ENCODE measurements at regions of chr17 and their contacts with region 1.

Region 1: GRCh38 chr17:57009737-57010445 is 32.0 kb downstream of the SCPEP1 start:
- DNase-seq: peak; percentile 33
- H3K4me3 ChIP-seq: no peak overlapping the region
- H3K27ac ChIP-seq: no peak overlapping the region
- H3K4me1 ChIP-seq: no peaks in the 10 kb centered on the region
- H3K27me3 ChIP-seq: no peaks in the 10 kb centered on the region
- CTCF ChIP-seq: peak; percentile 9 to 69 (median 42)
- POLR2A ChIP-seq: no peak

Region 2: DNA sequence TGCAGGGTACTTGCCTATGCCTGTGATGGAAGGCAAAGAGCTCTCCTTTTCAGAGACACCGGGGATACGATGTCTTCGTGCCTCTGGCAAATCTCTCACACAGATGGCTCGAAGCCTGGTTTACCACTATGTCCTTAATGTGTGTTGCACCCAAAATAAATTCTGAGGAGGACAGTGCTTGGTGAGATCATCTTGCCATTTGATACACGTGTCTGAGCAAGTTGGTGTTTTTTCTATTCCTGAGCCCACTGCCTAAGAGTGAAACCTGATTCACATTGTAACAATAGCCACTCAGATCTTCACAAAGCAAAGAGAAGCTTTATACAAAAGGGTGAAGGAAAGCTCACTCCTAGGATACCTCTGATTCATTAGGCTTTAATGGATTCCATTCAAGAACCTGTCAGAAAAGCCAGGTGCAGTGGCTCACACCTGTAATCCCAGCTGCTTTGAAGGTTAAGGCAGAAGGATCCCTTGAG is 42.0 kb after region 1 on chr17:
- intact Hi-C with region 1: loop called (anchors 1 kb)
- DNase-seq: peak; percentile 51
- H3K4me3 ChIP-seq: no peak overlapping the region
- H3K27ac ChIP-seq: peak overlapping the region; percentile 27 to 35
- H3K4me1 ChIP-seq: peaks cover 3% of the 10 kb centered on the region
- H3K27me3 ChIP-seq: no peaks in the 10 kb centered on the region
- CTCF ChIP-seq: no peak
- POLR2A ChIP-seq: no peak

Region 3: DNA sequence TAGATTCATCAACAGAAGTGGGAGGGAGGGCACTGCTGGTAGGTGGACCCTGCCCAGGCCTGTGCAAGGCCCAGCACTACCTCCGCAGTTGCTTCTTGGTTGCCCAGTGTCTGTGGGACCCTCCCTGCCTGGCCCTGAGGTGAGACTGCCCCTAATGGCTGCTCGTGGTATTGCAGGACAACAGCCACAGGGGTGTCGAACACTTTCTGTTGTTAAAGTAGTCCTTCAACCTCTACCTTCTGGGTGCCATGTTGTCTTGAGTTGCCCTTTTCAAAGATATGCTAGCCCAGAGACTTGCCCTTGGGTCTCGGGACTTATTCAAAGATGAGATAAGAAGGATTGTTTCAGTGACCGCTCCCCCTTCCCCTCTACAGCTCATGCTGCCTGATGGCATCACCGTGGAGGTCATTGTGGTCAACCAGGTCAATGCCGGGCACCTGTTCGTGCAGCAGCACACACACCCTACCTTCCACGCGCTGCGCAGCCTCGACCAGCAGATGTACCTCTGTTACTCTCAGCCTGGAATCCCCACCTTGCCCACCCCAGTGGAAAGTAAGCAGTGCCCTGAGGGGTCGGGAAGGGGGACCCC is 104.3 kb after region 1 on chr17:
- intact Hi-C with region 1: loop called (anchors 10 kb)
- DNase-seq: no peak
- H3K4me3 ChIP-seq: no peak overlapping the region
- H3K27ac ChIP-seq: no peak overlapping the region
- H3K4me1 ChIP-seq: peaks cover 4% of the 10 kb centered on the region
- H3K27me3 ChIP-seq: no peaks in the 10 kb centered on the region
- CTCF ChIP-seq: peak; percentile 63 to 77 (median 71)
- POLR2A ChIP-seq: no peak